Activated CD4-positive, alpha-beta T cell treated with anti-CD3 and anti-CD28 coated beads, Interleukin-2, amount 10 ng/mL, durations not matched to agents 24 days and 14 days (primary cell): ENCODE measurements at regions of chr14 and their contacts with region 1.

Region 1: DNA sequence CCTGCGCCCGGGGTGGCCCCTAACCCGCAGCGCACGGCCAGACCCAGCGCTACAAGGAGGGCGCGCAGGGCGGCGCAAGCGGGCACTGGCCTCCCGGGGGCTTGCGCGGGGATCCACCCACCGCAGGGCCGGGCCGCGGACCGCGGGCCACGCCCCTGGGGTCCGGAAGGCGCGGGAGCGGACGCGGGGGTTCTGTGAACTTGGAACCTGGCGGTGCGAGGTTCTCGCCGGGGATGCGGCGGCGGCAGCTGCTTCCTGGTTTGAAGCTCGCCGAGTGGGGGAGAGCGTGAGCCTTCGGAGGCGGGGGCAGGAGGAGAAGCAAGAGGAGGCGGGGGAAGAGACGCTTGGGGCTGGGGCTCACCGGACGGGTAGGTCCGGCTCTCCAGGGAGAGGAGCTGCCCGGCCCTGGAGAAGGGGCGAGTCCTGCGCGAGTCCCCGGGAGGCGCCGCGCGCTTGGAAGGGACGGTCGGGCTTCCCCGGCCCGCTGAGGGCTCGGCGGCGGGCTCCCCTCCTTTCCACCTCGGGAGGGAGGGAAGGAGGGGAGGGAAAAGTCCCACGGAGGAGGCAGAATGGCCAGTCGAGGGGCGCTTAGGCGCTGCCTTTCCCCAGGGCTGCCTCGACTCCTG is at the start of gene PRKCH:
- DNase-seq: peak; percentile 96
- H3K4me3 Mint-ChIP-seq: peak within 1 kb of the TSS; percentile 93
- H3K27ac Mint-ChIP-seq: peak within 1 kb of the TSS; percentile 91
- H3K4me1 Mint-ChIP-seq: peaks cover 21% of the 10 kb centered on the region
- H3K27me3 Mint-ChIP-seq: no peaks in the 10 kb centered on the region
- total RNA-seq, gene PRKCH: 108 and 118 TPM in 2 replicates

Region 2: GRCh38 chr14:61280526-61281185 is 40.8 kb before region 1 on chr14:
- intact Hi-C with region 1: loop called (anchors 5 kb)
- DNase-seq: peak; percentile 92
- H3K4me3 Mint-ChIP-seq: peak overlapping the region; percentile 88
- H3K27ac Mint-ChIP-seq: peak overlapping the region; percentile 84
- H3K4me1 Mint-ChIP-seq: peaks cover 31% of the 10 kb centered on the region
- H3K27me3 Mint-ChIP-seq: peaks cover 29% of the 10 kb centered on the region

Region 3: GRCh38 chr14:61296719-61297502 is 24.6 kb before region 1 on chr14:
- intact Hi-C with region 1: loop called (anchors 1 kb)
- DNase-seq: peak; percentile 78
- H3K4me3 Mint-ChIP-seq: no peak overlapping the region
- H3K27ac Mint-ChIP-seq: no peak overlapping the region
- H3K4me1 Mint-ChIP-seq: peaks cover 30% of the 10 kb centered on the region
- H3K27me3 Mint-ChIP-seq: no peaks in the 10 kb centered on the region

Region 4: GRCh38 chr14:61355892-61356325 is 34.4 kb after region 1 on chr14:
- intact Hi-C with region 1: loop called (anchors 5 kb)
- DNase-seq: peak; percentile 78
- H3K4me3 Mint-ChIP-seq: peak overlapping the region; percentile 77
- H3K27ac Mint-ChIP-seq: peak overlapping the region; percentile 75
- H3K4me1 Mint-ChIP-seq: peaks cover 80% of the 10 kb centered on the region
- H3K27me3 Mint-ChIP-seq: no peaks in the 10 kb centered on the region